K562 (cell line): ENCODE measurements at regions of chr3 and their contacts with region 1.

Region 1: GRCh38 chr3:60344340-60344739 is 906.9 kb downstream of the FHIT start:
- DNase-seq: no peak
- ATAC-seq: no peak
- H3K4me3 ChIP-seq: no peak overlapping the region
- H3K27ac ChIP-seq: no peak overlapping the region
- H3K4me1 ChIP-seq: no peaks in the 10 kb centered on the region
- H3K27me3 ChIP-seq: no peaks in the 10 kb centered on the region
- CTCF ChIP-seq: no peak
- EP300 ChIP-seq: no peak
- POLR2A ChIP-seq: no peak
- RAD21 ChIP-seq: no peak

Region 2: DNA sequence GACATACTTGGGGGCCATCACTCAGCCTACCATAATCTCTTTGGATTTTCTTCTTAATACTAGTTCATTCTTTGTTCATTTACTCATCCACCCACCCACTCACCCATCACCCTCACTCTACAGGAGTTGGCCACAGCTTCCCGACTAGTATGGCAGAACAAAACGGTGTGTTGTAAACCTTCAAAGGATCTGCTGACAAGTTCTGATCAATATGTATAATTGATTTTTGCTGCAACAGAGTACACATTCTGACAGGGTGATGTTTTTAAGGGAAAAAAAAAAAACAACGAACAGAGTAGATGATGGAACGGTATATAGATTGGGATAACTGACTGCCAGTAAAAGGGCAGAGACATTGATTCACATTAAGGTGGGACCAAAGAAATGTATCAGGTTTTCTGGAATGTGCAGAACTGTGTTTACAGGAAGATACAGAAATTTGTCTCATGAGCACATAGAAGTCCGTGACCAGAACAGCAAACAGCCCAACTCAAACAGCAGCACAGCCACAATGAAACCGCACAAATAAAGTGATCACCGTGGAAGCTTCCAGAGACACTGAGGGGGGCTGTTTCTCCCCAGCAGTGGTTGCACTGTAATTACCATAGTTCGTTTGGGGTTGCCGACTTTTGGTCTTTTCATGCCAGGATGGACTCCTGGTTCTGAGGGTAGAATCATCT is 25.0 kb before region 1 on chr3:
- CTCF ChIA-PET with region 1: no interaction called
- POLR2A ChIA-PET with region 1: no interaction called
- in situ Hi-C with region 1: no loop called
- intact Hi-C with region 1: loop called (anchors 1 kb)
- DNase-seq: no peak
- ATAC-seq: no peak
- H3K4me3 ChIP-seq: no peak overlapping the region
- H3K27ac ChIP-seq: no peak overlapping the region
- H3K4me1 ChIP-seq: no peaks in the 10 kb centered on the region; a peak in 1 of 5 replicates
- H3K27me3 ChIP-seq: no peaks in the 10 kb centered on the region; a peak in 1 of 5 replicates
- CTCF ChIP-seq: no peak
- EP300 ChIP-seq: no peak
- POLR2A ChIP-seq: no peak
- RAD21 ChIP-seq: no peak